Endothelial cell of umbilical vein (primary cell): ENCODE measurements at regions of chr15 and their contacts with region 1.

Region 1: DNA sequence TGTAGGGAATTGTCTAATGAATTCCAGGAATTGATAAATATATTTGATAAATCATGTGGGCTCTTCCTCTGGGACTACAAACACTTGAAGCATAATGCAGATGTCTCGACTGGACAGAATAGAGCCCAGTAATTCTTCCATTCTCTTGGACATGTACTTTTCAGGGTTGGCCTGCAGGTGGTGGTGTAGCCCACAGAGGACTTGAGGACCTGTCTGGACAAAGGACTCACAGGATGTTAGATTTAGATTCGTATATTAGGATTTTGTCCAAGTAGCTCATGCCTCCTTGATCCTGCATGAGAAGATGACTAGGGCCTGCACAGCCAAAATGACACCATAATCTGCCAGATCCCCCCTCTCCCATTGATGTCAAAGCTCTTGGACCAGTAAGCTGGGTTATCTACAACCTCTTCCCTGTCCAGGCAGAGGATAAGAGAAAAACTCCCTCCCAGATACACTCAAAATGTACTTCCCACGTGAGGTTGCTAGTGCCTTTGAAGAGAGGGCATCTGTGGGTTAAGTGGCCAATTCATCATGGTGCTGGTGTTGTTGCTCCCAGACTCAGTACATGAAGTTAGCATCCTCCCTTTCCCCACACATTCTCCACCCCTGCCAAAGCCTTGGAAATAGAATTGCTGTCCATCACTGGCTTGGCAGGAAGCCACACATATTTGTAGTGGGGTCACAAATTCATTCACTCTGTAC is 88.6 kb upstream of the ZNF280D start:
- DNase-seq: peak; percentile 77
- H3K4me3 ChIP-seq: no peak overlapping the region
- H3K27ac ChIP-seq: no peak overlapping the region
- H3K4me1 ChIP-seq: peaks cover 18% of the 10 kb centered on the region
- H3K27me3 ChIP-seq: peaks cover 0 to 3% of the 10 kb centered on the region in 2 experiments
- CTCF ChIP-seq: peak; percentile 65 to 74
- POLR2A ChIP-seq: no peak

Region 2: DNA sequence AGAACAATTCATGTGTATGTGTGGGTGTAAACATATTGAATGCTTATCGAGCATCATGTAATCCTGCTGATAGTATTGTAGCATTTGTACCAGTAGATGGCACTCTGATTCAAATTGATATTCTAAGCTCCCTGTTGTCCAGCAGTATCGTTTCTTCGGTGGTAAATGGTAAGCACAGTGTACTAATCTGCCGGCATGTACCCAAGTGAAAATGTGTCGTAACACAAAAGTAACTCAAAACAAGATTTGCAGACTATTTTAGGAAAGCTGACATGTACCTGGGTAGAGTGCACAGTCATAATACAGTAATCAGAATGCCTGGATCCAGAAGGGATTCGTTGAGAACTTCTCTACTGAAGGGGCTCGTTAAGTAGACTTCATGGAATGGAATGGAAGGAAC is 325.2 kb before region 1 on chr15:
- CTCF ChIA-PET with region 1: interaction called, 10 read pairs
- POLR2A ChIA-PET with region 1: no interaction called
- dilution Hi-C with region 1: no loop called
- intact Hi-C with region 1: loop called (anchors 2 kb)
- DNase-seq: peak; percentile 78
- H3K4me3 ChIP-seq: no peak overlapping the region
- H3K27ac ChIP-seq: no peak overlapping the region
- H3K4me1 ChIP-seq: no peaks in the 10 kb centered on the region
- H3K27me3 ChIP-seq: peaks cover 7 to 19% of the 10 kb centered on the region in 2 experiments
- CTCF ChIP-seq: peak; percentile 43 to 47
- POLR2A ChIP-seq: no peak

Region 3: DNA sequence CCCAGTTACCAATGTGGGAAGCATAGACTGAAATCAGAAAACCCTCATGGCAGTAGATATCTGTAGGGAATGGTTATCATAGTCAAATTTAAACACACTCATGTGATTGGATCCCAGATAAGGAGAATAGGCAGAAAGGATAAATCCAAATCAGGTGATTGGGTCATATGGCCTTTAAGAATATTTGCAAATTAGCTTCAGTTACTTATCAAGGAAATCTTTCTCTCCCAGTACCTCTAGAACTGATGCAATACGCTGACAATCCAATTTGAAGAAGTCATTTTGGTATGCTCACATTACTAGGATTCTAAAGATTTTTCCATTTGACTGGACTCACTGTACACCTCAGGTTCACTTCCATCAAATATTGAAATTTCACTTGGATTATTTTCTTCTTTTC is 269.2 kb before region 1 on chr15:
- CTCF ChIA-PET with region 1: no interaction called
- POLR2A ChIA-PET with region 1: no interaction called
- dilution Hi-C with region 1: no loop called
- intact Hi-C with region 1: no loop called
- DNase-seq: no peak
- H3K4me3 ChIP-seq: no peak overlapping the region
- H3K27ac ChIP-seq: no peak overlapping the region
- H3K4me1 ChIP-seq: no peaks in the 10 kb centered on the region
- H3K27me3 ChIP-seq: no peaks in the 10 kb centered on the region
- CTCF ChIP-seq: no peak
- POLR2A ChIP-seq: no peak

Region 4: DNA sequence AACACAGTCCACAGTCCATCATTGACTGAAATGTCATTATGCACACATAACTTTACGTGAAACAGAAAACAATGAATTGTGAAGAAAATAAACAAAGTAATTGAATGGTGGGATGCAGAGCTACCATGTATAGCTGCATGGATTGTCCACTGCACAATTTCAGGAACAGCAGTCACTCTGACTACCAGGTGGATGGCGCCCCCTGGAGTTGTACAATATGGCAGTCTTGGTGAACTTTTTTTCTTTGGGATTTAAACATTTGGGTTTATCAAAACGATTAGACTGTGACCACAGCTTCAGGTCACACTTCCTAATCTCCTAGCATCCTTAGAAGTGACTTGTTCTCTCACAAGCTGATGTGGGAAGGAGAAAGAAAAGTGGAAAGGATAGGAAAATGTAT is 47.7 kb after region 1 on chr15:
- CTCF ChIA-PET with region 1: interaction called, 28 read pairs
- POLR2A ChIA-PET with region 1: no interaction called
- dilution Hi-C with region 1: no loop called
- intact Hi-C with region 1: loop called (anchors 1 kb)
- DNase-seq: peak; percentile 31
- H3K4me3 ChIP-seq: no peak overlapping the region
- H3K27ac ChIP-seq: no peak overlapping the region
- H3K4me1 ChIP-seq: peaks cover 16% of the 10 kb centered on the region
- H3K27me3 ChIP-seq: no peaks in the 10 kb centered on the region
- CTCF ChIP-seq: peak; percentile 41 to 46
- POLR2A ChIP-seq: no peak

Region 5: DNA sequence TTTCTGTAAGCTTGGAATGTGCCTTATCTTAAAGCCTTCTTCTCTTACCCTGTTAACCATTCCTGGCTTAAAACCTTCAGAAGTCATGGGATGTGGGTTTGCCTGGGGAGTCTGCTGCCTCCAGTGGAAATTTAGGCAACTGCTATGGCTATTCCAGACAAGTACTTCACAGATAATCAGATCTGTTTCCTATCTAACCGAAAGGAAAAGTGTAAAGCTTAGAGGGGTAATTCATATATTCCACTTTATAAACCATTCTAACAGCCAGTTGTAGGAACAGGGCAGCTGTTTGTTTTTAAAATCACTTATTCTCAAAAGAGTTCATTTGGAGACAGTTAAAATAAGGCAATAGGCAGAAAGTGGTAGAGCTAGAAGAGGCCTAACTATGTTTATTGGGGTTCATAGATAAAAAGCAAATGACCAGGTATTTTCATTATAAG is 316.5 kb after region 1 on chr15:
- CTCF ChIA-PET with region 1: interaction called, 10 read pairs
- POLR2A ChIA-PET with region 1: no interaction called
- dilution Hi-C with region 1: no loop called
- intact Hi-C with region 1: loop called (anchors 5 kb)
- DNase-seq: peak; percentile 75
- H3K4me3 ChIP-seq: no peak overlapping the region
- H3K27ac ChIP-seq: no peak overlapping the region
- H3K4me1 ChIP-seq: peaks cover 33% of the 10 kb centered on the region
- H3K27me3 ChIP-seq: no peaks in the 10 kb centered on the region
- CTCF ChIP-seq: peak; percentile 61 to 74
- POLR2A ChIP-seq: no peak

Region 6: DNA sequence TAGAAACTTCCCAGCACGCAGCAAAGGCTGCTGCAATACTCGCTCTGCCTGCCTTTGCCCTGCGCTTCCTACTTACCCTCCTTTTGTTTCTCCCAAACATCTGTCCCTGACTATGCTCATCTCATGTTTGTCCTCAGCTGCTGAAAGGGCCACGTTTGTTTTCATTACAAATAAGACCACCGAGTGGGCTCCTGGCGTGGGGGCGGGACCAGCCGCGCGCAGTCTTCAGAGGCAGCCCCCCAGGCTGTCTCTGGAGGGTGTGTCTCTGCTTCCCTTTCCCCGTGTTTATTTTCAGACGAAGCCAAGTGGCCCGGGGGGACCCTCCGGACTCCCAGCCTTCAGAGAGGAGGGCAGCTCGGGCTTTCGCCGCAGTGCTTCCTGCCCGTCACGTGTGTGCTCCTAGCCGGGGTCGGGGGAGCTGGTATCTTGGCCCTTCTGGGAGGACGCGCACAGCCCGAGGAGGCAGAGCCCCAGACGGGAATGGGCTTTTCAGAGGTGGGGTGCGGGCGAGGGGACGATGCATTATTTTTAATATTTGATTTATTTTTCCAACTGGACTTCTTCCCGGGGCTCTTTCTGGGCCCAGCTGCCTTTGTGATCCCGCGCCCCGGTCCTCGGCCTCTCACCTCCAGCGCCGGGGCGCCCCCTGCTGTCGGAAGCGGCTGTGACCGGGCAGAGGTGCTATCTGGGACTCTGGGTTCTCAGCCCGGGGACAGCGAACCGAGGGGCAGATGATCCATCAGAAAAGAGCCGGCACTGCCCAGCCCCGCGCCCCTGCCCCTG is 484.5 kb after region 1 on chr15:
- CTCF ChIA-PET with region 1: interaction called, 11 read pairs
- POLR2A ChIA-PET with region 1: no interaction called
- dilution Hi-C with region 1: no loop called
- intact Hi-C with region 1: loop called (anchors 1 kb)
- DNase-seq: peak; percentile 53
- H3K4me3 ChIP-seq: peak overlapping the region; percentile 33 to 39 (median 35)
- H3K27ac ChIP-seq: peak overlapping the region; percentile 32
- H3K4me1 ChIP-seq: peaks cover 11% of the 10 kb centered on the region
- H3K27me3 ChIP-seq: no peaks in the 10 kb centered on the region
- CTCF ChIP-seq: peak; percentile 90 to 91
- POLR2A ChIP-seq: no peak